ENCODE measurements at regions of chr9 and their contacts with region 1.

Region 1: DNA sequence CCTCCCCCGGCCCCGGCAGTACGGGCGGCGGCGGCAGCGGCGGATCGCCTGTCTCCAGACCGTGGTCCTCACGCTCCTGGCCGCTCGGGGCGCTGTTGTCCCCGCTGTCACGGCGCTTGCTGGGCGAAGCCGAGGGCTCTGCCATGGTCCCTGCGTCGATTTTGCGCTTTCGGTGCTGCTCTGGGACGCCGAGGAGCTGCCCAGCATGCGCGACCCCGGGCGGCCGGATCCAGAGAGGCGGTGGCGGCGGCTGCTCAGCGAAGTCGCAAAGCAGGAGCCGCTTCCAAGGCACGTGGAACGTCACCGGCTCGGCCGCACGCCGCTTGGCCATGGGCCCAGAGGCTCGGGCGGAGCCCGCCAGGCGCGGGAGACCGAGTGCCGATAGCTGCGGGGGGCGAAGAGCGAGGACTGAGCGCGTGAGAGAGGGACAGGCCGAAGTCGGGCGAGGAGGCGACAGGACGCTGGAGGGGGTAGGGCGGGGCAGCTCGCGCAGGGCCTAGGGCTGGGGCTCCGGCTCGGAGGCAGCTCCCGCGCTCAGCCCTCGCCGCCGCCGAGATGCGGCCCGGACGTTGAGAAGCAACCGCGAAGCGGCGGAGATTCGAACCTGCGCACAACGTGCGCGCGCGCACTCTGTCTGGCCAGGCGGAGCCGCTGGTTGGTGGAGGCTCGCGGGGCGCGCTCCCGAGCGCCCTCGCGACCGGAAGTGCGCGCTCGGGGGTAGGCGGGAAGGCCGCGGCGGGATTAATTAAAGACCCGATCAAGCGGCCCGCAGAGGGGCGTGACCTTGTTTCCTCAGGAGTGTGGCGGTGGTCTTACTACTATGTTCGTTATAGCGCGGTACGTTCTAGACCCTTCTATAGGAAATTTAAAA is at the start of gene C9orf40:
- H3K4me3 ChIP-seq: peak within 1 kb of the TSS; percentile 94
- H3K27ac ChIP-seq: peak within 1 kb of the TSS; percentile 98
- H3K4me1 ChIP-seq: 0 out of 2 replicates have a peak, but pooled peaks cover 3% of the 10 kb centered on the region
- CTCF ChIP-seq: peak; percentile 86

Region 2: DNA sequence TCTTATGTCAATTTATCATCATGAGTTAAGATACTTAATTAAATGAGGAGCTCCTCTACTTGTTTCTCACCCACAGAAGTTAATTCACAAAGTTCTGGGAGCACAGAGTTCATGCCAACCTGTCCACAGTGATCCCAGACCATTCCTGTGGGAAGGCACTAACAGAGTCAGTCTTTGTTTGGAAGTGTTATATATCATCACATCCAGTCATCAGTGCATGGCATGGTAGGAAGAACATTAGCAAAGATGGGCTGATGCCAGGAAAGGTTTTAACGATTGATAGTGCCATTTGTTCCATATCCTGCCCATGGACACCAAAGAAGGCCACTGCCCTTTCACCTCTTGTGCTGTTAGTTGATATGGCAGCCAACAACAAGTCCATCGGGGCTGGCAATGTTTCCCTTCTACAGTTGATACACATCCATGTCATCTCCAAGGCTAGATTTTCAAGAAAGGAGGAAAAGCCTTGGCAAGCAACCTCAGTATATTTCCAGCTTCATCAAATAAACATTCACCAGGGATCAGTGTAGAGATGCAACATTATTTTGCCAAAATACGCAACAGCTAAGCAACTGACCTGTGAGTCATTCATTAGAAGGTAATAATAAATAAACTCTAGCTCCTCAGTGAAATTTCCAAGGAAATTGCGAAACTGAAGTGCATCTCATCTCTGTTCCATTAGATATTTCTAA is 285.7 kb before region 1 on chr9:
- CTCF ChIA-PET with region 1: no interaction called
- POLR2A ChIA-PET with region 1: no interaction called
- H3K4me3 ChIP-seq: no peak overlapping the region
- H3K27ac ChIP-seq: no peak overlapping the region
- H3K4me1 ChIP-seq: no peaks in the 10 kb centered on the region
- CTCF ChIP-seq: no peak

Region 3: GRCh38 chr9:74940600-74940999 is 11.9 kb before region 1 on chr9:
- CTCF ChIA-PET with region 1: interaction called, 13 read pairs
- POLR2A ChIA-PET with region 1: interaction called, 3 read pairs
- H3K4me3 ChIP-seq: no peak overlapping the region
- H3K27ac ChIP-seq: no peak overlapping the region
- H3K4me1 ChIP-seq: no peaks in the 10 kb centered on the region
- CTCF ChIP-seq: no peak

Measured in HEK293 (cell line).